B cell (primary cell): ENCODE measurements at regions of chr19 and their contacts with region 1.

Region 1: GRCh38 chr19:46487802-46488445 is 7.7 kb downstream of the PNMA8B start:
- DNase-seq: peak; percentile 78
- ATAC-seq: peak; percentile 49
- H3K4me3 ChIP-seq: no peak overlapping the region
- H3K4me3 Mint-ChIP-seq: no peak overlapping the region
- H3K27ac ChIP-seq: no peak overlapping the region
- H3K27ac Mint-ChIP-seq: no peak overlapping the region
- H3K4me1 ChIP-seq: peaks cover 23 to 43% of the 10 kb centered on the region in 2 donors
- H3K4me1 Mint-ChIP-seq: peaks cover 22% of the 10 kb centered on the region
- H3K27me3 ChIP-seq: peaks cover 0 to 69% (median 44%) of the 10 kb centered on the region in 4 experiments
- H3K27me3 Mint-ChIP-seq: peaks cover 64% of the 10 kb centered on the region
- CTCF ChIP-seq: peak; percentile 83

Region 2: GRCh38 chr19:46283771-46284170 is 204.2 kb before region 1 on chr19:
- CTCF ChIA-PET with region 1: interaction called, 7 read pairs
- POLR2A ChIA-PET with region 1: no interaction called
- intact Hi-C with region 1: loop called (anchors 2 kb)
- DNase-seq: no peak
- ATAC-seq: no peak
- H3K4me3 ChIP-seq: no peak overlapping the region
- H3K4me3 Mint-ChIP-seq: no peak overlapping the region
- H3K27ac ChIP-seq: no peak overlapping the region
- H3K27ac Mint-ChIP-seq: no peak overlapping the region
- H3K4me1 ChIP-seq: no peaks in the 10 kb centered on the region
- H3K4me1 Mint-ChIP-seq: no peaks in the 10 kb centered on the region
- H3K27me3 ChIP-seq: no peaks in the 10 kb centered on the region
- H3K27me3 Mint-ChIP-seq: peaks cover 14% of the 10 kb centered on the region
- CTCF ChIP-seq: no peak